ENCODE measurements at regions of chr1 and their contacts with region 1.

Region 1: DNA sequence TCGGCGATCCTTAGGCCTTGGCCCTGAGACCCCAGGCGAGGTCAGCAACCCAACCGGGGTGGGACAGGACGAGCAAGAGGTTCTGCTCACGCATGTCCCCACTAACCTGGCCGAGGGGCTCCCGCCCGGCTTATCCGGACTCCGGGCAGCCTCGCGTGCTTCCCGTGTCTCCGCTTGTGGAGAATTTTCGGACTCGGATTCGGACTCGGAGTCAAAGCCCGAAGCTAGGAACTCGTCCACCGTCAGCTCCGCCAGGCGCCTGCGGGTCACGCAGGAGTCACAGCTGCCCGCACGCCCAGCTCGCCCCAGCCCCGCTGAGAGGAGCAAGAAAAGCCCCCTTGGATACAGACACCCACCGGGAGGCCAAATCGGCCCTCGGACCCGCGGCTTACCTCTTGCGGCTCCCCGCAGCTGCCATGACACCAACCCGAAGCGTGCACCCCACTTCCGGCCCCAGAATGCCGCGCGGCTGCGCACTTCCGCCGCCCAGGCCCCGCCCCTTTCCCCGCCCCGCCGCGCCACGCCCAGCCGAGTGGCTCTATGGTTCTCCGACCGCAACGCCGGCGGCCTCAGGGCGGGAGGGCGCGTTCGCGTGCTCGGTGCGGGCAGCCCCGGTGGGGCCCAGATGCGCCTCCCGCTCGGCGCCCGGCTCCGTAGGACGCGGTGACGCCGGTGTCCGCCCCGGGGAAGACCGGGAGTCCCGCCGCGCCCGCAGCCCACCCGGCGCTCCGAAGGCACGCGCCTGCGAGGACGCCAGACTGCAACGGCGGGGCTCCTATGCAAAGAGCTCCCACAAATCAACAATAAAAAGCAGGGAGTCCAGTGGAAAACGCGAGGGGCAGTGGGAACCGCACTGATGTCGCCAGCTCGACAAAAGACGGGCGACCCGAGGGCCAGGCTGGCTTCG is at the start of gene NOC2L:
- DNase-seq: peak; percentile 65 to 95
- H3K4me3 ChIP-seq: peak within 1 kb of the TSS; percentile 89 to 92
- H3K27ac ChIP-seq: peak within 1 kb of the TSS in 1 of 2 donors; percentile 37
- H3K4me1 ChIP-seq: peaks cover 8 to 27% of the 10 kb centered on the region in 2 donors
- H3K27me3 ChIP-seq: no peaks in the 10 kb centered on the region
- CTCF ChIP-seq: no peak
- total RNA-seq, gene NOC2L: 33.2 TPM

Region 2: GRCh38 chr1:904310-904950 is 54.6 kb before region 1 on chr1:
- intact Hi-C with region 1: loop called (anchors 5 kb)
- DNase-seq: peak; percentile 8 to 89
- H3K4me3 ChIP-seq: peak overlapping the region; percentile 45 to 68
- H3K27ac ChIP-seq: peak overlapping the region in 1 of 2 donors; percentile 26
- H3K4me1 ChIP-seq: no peaks in the 10 kb centered on the region
- H3K27me3 ChIP-seq: no peaks in the 10 kb centered on the region
- CTCF ChIP-seq: peak; percentile 70 to 94 (median 88)

Region 3: DNA sequence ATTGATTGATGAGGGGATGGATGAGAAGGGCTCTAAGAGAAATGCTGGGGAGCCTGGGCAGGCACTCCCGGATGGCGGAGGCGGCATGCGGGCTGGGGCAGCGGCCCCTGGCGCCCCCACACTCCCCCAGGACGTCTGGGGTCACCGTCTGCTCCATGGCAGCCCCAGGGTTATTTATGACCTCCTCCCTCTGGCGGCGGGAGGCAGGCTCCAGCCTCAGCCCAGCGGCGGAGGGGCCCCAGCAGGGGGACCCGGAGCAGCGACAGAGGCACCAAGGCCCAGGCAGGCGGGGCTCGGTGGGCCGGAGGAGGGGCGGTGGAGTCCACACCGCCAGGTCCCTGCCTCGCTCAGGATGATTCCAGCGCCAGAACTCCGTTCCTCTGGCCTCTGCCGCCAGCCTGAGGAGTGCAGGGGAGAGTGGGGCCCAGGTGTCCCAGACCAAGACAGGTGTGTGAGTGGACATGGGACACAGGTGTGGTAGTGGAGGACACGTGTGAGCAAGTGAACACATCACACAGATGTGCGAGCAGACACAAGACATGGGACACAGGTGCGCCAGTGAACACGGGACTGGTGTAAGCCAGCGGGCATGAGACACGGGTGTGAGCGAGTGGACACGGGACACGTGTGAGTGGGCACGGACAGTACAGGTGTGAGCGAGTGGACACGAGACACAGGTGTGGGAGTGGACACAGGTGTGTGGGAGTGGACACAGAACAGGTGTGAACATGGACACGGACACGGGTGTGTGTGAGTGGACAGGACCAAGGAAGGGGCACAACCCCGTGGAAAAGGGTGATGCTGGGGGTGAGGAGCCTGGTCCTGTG is 37.9 kb before region 1 on chr1:
- intact Hi-C with region 1: loop called (anchors 2 kb)
- DNase-seq: peak in 1 of 2 donors; percentile 79
- H3K4me3 ChIP-seq: peak overlapping the region in 1 of 2 donors; percentile 28
- H3K27ac ChIP-seq: no peak overlapping the region
- H3K4me1 ChIP-seq: peaks cover 22 to 32% of the 10 kb centered on the region in 2 donors
- H3K27me3 ChIP-seq: peaks cover 2% of the 10 kb centered on the region
- CTCF ChIP-seq: peak; percentile 45 to 67 (median 61)

Region 4: DNA sequence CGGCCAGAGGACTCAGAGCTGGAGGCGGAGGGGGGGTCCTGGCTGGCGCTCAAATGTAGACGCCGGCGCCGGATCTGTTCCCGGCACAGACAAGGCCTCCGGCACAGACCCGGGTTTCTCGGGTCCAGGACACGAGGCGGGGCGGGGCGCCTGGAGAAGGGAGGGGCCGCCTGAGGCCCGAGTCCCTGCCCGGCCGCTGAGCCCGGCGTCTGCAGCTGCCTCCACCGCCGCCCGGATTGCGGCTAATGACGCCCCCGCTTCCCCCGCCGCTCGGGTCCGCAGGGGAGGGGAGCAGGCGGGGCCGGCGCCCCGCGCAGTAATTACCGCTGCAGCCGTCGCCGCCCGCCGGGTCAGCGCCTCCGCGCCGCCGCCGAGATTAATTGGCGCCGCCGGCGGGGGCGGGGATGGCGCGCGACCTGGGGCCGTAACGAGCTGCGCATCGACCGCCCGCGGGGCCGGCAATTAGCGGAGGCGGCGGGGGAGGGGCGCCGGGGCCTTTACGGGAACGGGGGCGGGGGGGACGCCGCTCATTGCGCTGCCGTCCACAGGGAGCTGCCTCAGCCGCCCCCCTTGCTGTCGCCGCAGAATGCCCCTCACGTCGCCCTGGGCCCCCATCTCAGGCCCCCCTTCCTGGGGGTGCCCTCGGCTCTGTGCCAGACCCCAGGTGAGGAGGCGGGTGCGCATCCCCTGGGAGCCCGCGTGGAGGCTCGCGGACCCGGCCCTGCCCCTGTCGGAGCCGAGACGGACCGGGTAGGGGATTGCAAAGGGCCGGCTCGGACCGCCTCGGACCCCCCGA is 17.3 kb before region 1 on chr1:
- intact Hi-C with region 1: loop called (anchors 2 kb)
- DNase-seq: peak in 1 of 2 donors; percentile 85
- H3K4me3 ChIP-seq: peak overlapping the region; percentile 50 to 62
- H3K27ac ChIP-seq: peak overlapping the region; percentile 56 to 70
- H3K4me1 ChIP-seq: peaks cover 13 to 21% of the 10 kb centered on the region in 2 donors
- H3K27me3 ChIP-seq: peaks cover 12% of the 10 kb centered on the region
- CTCF ChIP-seq: no peak

Region 5: DNA sequence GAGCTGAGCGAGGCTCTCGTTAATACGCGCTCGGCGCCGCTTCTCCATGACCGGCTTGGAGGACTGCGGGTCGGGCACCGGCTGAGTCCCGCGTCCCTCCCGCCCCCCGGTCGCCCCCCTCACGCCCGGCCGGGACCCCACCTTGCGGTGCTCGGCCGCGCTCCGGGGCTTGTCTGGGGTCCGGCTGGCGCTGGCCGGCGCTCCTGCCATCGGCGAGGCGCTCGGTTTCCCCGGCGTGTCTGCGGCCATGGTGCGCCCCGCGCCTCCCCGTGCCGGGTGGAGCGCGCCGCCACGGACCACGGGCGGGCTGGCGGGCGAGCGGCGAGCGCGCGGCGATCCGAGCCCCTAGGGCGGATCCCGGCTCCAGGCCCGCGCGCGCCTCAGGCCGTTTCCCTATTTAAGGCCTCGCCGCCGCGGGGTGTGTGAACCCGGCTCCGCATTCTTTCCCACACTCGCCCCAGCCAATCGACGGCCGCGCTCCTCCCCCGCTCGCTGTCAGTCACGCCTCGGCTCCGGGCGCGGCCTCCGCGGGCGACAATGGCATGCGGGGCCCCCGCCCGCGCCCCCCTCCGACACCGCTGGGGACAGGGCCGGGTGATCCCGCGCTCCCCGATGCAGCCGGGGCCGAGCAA is 40.8 kb after region 1 on chr1 and contains the start of gene HES4:
- intact Hi-C with region 1: loop called (anchors 1 kb)
- DNase-seq: peak; percentile 67 to 96
- H3K4me3 ChIP-seq: peak within 1 kb of the TSS; percentile 58 to 68
- H3K27ac ChIP-seq: peak within 1 kb of the TSS; percentile 98
- H3K4me1 ChIP-seq: peaks cover 17 to 19% of the 10 kb centered on the region in 2 donors
- H3K27me3 ChIP-seq: no peaks in the 10 kb centered on the region
- CTCF ChIP-seq: peak in 1 of 3 experiments; percentile 7
- total RNA-seq, gene HES4: 285 TPM

Region 6: GRCh38 chr1:1019122-1019999 is 60.3 kb after region 1 on chr1:
- intact Hi-C with region 1: loop called (anchors 1 kb)
- DNase-seq: peak in 1 of 2 donors; percentile 87
- H3K4me3 ChIP-seq: peak overlapping the region; percentile 93 to 95
- H3K27ac ChIP-seq: peak overlapping the region; percentile 87 to 93
- H3K4me1 ChIP-seq: peaks cover 10% of the 10 kb centered on the region in 2 donors
- H3K27me3 ChIP-seq: no peaks in the 10 kb centered on the region
- CTCF ChIP-seq: peak; percentile 28 to 54 (median 48)

Measured in ascending aorta (tissue), 2 donors.